ENCODE measurements at regions of chr5 and their contacts with region 1.

Region 1: DNA sequence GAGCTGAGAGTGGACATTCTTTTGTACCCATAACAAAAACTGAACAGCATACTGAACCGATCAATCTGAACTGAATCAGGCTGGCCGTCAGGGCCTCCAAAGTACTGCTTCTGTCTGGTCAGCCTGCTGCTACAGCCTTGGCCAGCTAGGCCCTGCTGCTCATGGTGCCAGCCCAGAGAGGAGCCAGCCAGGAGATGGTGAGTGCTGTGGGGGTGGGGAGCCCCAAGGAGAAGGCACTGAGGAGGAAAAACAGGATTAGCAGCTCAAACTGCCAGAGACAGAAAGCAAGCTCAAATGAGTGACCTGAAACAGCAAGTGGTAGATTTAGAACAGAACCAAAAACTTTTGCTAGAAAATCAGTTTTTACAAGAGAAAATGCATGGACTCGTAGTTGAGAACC is 23.9 kb downstream of the SRP19 start:
- DNase-seq: no peak
- H3K4me3 Mint-ChIP-seq: no peak overlapping the region
- H3K27ac Mint-ChIP-seq: peak overlapping the region; percentile 48
- H3K4me1 Mint-ChIP-seq: peaks cover 51% of the 10 kb centered on the region
- H3K27me3 Mint-ChIP-seq: no peaks in the 10 kb centered on the region

Region 2: DNA sequence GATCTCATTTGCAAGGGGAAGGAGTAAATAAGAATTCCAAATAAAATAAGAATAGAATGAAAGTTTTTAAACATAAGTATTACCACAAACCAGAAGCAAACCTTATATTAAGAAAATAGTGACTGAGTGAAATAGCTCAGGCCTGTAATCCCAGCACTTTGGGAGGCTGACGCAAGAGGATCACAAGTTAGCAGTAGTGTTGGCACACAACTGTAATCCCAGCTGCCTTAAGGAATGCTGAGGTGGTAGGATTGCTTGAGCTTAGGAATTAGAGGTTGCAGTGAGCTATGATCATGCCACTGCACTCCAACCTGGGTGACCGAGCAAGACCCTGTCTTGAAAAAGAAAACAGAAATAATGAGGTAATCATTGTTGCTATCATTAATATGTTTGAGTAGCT is 100.3 kb before region 1 on chr5:
- CTCF ChIA-PET with region 1: no interaction called
- POLR2A ChIA-PET with region 1: no interaction called
- DNase-seq: no peak
- H3K4me3 Mint-ChIP-seq: no peak overlapping the region
- H3K27ac Mint-ChIP-seq: no peak overlapping the region
- H3K4me1 Mint-ChIP-seq: no peaks in the 10 kb centered on the region
- H3K27me3 Mint-ChIP-seq: no peaks in the 10 kb centered on the region

Region 3: DNA sequence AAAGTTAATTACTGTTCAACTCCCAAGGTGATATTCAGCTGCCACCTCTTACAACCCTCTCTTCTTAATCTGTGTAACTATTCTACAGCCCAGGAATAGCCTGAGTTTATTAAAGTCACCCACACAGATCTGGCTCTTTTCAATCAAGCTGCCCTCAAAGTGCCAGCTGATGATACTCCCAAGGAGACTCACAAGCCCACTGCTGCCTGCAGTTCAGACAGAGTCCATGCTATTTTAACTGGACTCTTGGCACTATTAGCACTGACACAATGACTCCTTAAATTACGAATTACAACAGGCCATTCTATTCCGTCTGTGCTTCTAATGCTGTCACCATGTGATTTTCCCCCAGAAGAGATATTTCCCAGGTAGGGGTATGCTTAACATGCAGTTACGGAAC is 10.7 kb after region 1 on chr5:
- CTCF ChIA-PET with region 1: interaction called, 13 read pairs
- POLR2A ChIA-PET with region 1: no interaction called
- DNase-seq: no peak
- H3K4me3 Mint-ChIP-seq: no peak overlapping the region
- H3K27ac Mint-ChIP-seq: no peak overlapping the region
- H3K4me1 Mint-ChIP-seq: peaks cover 9% of the 10 kb centered on the region
- H3K27me3 Mint-ChIP-seq: no peaks in the 10 kb centered on the region

Region 4: GRCh38 chr5:112957036-112957810 is 72.2 kb after region 1 on chr5:
- CTCF ChIA-PET with region 1: no interaction called
- POLR2A ChIA-PET with region 1: no interaction called
- DNase-seq: no peak
- H3K4me3 Mint-ChIP-seq: no peak overlapping the region
- H3K27ac Mint-ChIP-seq: no peak overlapping the region
- H3K4me1 Mint-ChIP-seq: peaks cover 29% of the 10 kb centered on the region
- H3K27me3 Mint-ChIP-seq: no peaks in the 10 kb centered on the region